ENCODE measurements at regions of chr10 and their contacts with region 1.

Region 1: GRCh38 chr10:121900443-121901174 is 27.2 kb downstream of the ATE1 start:
- DNase-seq: peak; percentile 55
- ATAC-seq: peak; percentile 96
- H3K4me3 ChIP-seq: no peak overlapping the region
- H3K27ac ChIP-seq: no peak overlapping the region
- H3K4me1 ChIP-seq: no peaks in the 10 kb centered on the region
- H3K27me3 ChIP-seq: no peaks in the 10 kb centered on the region
- CTCF ChIP-seq: peak; percentile 83; the same call in 1 of the 2 replicates

Region 2: DNA sequence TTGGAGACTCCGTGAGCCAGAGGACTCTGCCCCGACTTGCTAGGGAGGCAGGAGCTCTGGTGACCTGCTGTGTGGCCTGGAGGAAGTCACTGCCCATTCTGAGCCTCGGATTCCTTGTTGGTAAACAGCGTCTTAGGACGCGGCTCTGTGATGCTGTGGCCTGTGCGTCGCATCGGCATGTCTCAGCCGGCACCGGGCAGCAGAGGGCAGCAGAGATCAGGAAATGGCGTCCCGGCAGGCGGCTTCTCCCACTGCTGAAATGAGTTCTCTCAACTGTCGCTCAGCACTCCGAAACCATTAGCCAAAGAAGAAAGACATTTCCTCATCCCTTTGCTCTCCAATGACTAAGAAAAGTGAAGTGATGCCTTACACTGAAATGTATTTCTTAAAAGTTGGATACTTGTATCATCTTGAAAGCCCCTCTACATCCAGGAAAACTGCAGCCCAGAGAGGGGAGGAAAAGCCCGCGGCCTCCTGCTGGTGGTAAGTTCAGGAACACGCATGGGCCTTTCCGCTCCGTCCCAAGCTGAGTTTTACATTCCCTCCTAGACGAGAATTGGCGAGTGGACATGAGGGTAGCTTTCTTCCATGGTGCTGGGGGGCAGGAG is 957.7 kb before region 1 on chr10:
- CTCF ChIA-PET with region 1: no interaction called
- POLR2A ChIA-PET with region 1: no interaction called
- in situ Hi-C with region 1: no loop called
- intact Hi-C with region 1: loop called (anchors 5 kb)
- DNase-seq: peak; percentile 61
- ATAC-seq: peak; percentile 97
- H3K4me3 ChIP-seq: peak overlapping the region in 1 of 2 experiments; percentile 37; a peak in 1 of 4 replicates
- H3K27ac ChIP-seq: no peak overlapping the region
- H3K4me1 ChIP-seq: peaks cover 7% of the 10 kb centered on the region; the same call in 1 of the 2 replicates
- H3K27me3 ChIP-seq: no peaks in the 10 kb centered on the region
- CTCF ChIP-seq: peak; percentile 94

Region 3: GRCh38 chr10:121598207-121598862 is 302.3 kb before region 1 on chr10 and contains the start of gene FGFR2:
- CTCF ChIA-PET with region 1: no interaction called
- POLR2A ChIA-PET with region 1: no interaction called
- in situ Hi-C with region 1: no loop called
- intact Hi-C with region 1: loop called (anchors 10 kb)
- DNase-seq: no peak
- ATAC-seq: peak; percentile 94
- H3K4me3 ChIP-seq: peak within 1 kb of the TSS; percentile 55 to 61
- H3K27ac ChIP-seq: peak within 1 kb of the TSS; percentile 76
- H3K4me1 ChIP-seq: peaks cover 6% of the 10 kb centered on the region
- H3K27me3 ChIP-seq: peaks cover 18% of the 10 kb centered on the region
- CTCF ChIP-seq: no peak
- total RNA-seq, gene FGFR2: 5.7 TPM

Region 4: GRCh38 chr10:121792198-121792597 is 108.4 kb before region 1 on chr10:
- CTCF ChIA-PET with region 1: no interaction called
- POLR2A ChIA-PET with region 1: interaction called, 14 read pairs
- in situ Hi-C with region 1: no loop called
- intact Hi-C with region 1: no loop called
- DNase-seq: no peak
- ATAC-seq: peak; percentile 48; the same call in 1 of the 2 replicates
- H3K4me3 ChIP-seq: no peak overlapping the region
- H3K27ac ChIP-seq: no peak overlapping the region
- H3K4me1 ChIP-seq: no peaks in the 10 kb centered on the region
- H3K27me3 ChIP-seq: no peaks in the 10 kb centered on the region
- CTCF ChIP-seq: no peak

Region 5: DNA sequence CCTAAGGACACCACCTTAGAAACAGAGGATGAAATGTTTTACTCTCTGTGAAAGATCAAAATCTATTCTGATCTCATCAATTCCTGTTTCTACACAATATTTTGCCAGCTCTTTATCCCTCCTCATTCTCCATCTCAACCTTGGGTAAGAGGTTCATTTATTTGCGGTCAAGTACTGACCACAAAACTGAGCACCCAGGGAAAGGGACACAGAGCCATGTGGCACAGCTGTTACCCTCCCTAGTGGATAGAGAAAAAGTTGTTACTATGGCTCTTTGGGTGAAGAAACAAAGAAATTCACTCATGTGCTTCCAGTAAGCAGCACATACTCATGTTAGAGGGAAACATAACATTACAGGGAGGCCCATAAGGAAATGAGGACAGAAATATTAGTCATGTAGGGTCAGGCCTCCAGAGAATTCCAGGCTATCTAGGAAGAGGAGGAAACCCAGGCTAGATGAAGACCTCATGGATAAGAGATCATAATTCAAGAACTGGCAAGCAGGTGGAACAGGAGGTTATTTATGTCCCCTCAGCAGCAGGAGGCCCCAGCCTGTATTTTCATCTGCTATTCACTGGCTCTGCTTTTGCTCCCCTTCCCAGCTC is 87.3 kb before region 1 on chr10:
- CTCF ChIA-PET with region 1: no interaction called
- POLR2A ChIA-PET with region 1: no interaction called
- in situ Hi-C with region 1: no loop called
- intact Hi-C with region 1: no loop called
- DNase-seq: no peak
- ATAC-seq: no peak
- H3K4me3 ChIP-seq: no peak overlapping the region
- H3K27ac ChIP-seq: no peak overlapping the region
- H3K4me1 ChIP-seq: no peaks in the 10 kb centered on the region
- H3K27me3 ChIP-seq: no peaks in the 10 kb centered on the region
- CTCF ChIP-seq: no peak

Measured in Panc1 (cell line).